H1 (cell line): ENCODE measurements at regions of chr3 and their contacts with region 1.

Region 1: DNA sequence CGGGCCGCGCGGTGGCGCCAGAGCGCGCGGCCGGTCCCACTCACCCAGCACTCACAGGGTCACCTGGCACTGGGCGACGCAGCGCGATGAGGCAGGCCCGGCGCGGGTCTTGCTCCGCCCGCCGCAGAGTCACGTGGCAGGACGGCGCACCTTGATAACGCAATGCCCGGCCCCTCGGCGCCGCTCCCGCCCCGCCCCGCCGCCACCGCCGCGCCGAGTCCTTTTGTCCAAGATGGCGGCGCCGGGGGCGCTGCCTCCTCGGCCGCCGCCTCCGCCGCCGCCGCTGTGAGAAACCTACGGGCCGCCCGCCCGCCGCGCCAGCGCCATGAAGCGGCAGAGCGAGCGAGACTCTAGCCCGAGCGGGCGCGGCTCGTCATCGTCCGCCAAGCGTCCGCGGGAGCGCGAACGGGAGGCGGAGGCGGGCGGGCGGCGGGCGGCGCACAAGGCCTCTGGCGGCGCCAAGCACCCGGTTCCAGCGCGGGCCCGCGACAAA is at the start of gene RBM15B:
- DNase-seq: peak; percentile 93 to 98
- H3K4me3 ChIP-seq: peak within 1 kb of the TSS; percentile 75 to 90 (median 82)
- H3K27ac ChIP-seq: peak within 1 kb of the TSS; percentile 81
- H3K4me1 ChIP-seq: peaks cover 4 to 30% (median 17%) of the 10 kb centered on the region in 4 experiments
- H3K27me3 ChIP-seq: no peaks in the 10 kb centered on the region
- CTCF ChIP-seq: peak in 1 of 3 experiments; percentile 84; a peak in 2 of 4 replicates
- EP300 ChIP-seq: peak in 1 of 2 experiments; percentile 83; a peak in 1 of 3 replicates
- POLR2A ChIP-seq: peak in 1 of 2 experiments; percentile 94; a peak in 2 of 3 replicates
- RAD21 ChIP-seq: peak; percentile 57 to 62; a peak in 3 of 4 replicates
- total RNA-seq, gene RBM15B: 59.1 and 60.9 TPM in 2 replicates

Region 2: GRCh38 chr3:50627407-50628051 is 763.6 kb before region 1 on chr3:
- CTCF ChIA-PET with region 1: interaction called, 12 read pairs
- POLR2A ChIA-PET with region 1: no interaction called
- DNase-seq: no peak
- H3K4me3 ChIP-seq: no peak overlapping the region
- H3K27ac ChIP-seq: peak overlapping the region; percentile 32; the same call in 1 of the 2 replicates
- H3K4me1 ChIP-seq: peaks cover 2 to 21% (median 12%) of the 10 kb centered on the region in 4 experiments
- H3K27me3 ChIP-seq: no peaks in the 10 kb centered on the region
- CTCF ChIP-seq: peak in 2 of 3 experiments; percentile 79 to 82; a peak in 3 of 4 replicates
- EP300 ChIP-seq: no peak
- POLR2A ChIP-seq: no peak
- RAD21 ChIP-seq: peak; percentile 90 to 91

Region 3: DNA sequence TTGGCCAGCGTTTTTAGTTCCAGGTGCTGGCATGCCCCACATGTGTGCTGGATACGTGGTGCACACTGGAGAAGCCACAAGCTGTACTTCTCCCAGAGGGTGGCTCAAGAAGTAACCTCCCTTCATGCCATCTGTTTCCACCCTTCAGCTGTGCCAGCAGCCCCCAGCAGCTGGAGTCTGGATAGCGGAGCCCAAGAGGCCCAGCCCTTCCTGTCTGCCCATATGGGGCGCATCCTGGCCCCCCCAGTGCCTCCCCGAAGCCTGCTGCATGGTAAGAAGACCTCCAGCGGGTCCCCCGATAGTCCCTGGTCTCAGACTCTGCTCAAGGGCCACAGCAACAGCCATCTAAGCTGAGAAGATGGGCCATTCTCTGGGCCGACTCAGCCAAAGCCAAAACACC is 11.8 kb before region 1 on chr3:
- CTCF ChIA-PET with region 1: interaction called, 14 read pairs
- POLR2A ChIA-PET with region 1: interaction called, 23 read pairs
- DNase-seq: no peak
- H3K4me3 ChIP-seq: no peak overlapping the region
- H3K27ac ChIP-seq: no peak overlapping the region
- H3K4me1 ChIP-seq: peaks cover 0 to 3% (median 0%) of the 10 kb centered on the region in 4 experiments; a peak in 3 of 7 replicates
- H3K27me3 ChIP-seq: no peaks in the 10 kb centered on the region
- CTCF ChIP-seq: no peak
- EP300 ChIP-seq: no peak
- POLR2A ChIP-seq: no peak
- RAD21 ChIP-seq: no peak

Region 4: DNA sequence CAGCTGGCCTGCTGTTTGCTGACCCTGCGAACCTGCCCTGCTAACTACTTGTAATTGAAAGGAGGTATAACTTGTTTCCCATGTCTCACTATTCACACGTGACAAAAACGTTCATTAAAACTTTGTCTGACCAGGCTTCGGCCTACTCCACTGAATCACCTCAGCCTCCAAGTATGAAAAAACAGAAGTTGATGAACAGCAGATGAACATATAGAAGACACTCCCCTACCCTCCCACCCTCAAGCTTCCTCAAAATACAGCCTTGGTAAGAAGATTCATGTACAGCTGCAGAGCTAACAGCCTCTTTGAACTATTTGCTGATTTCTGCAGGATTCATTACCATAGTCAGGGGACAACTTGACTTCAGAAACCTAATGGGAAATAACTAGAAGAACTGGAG is 10.6 kb after region 1 on chr3:
- CTCF ChIA-PET with region 1: interaction called, 23 read pairs
- POLR2A ChIA-PET with region 1: interaction called, 23 read pairs
- DNase-seq: no peak
- H3K4me3 ChIP-seq: no peak overlapping the region
- H3K27ac ChIP-seq: no peak overlapping the region
- H3K4me1 ChIP-seq: peaks cover 0 to 3% (median 0%) of the 10 kb centered on the region in 4 experiments; a peak in 1 of 7 replicates
- H3K27me3 ChIP-seq: no peaks in the 10 kb centered on the region
- CTCF ChIP-seq: no peak
- EP300 ChIP-seq: no peak
- POLR2A ChIP-seq: no peak
- RAD21 ChIP-seq: no peak